Spleen (tissue), 13 donors: ENCODE measurements at regions of chr1 and their contacts with region 1.

Region 1: GRCh38 chr1:75632350-75632949 is 21.5 kb upstream of the SLC44A5 start:
- DNase-seq: no peak
- H3K4me3 ChIP-seq: no peak overlapping the region
- H3K27ac ChIP-seq: no peak overlapping the region
- H3K4me1 ChIP-seq: no peaks in the 10 kb centered on the region
- H3K27me3 ChIP-seq: peaks cover 0 to 3% (median 0%) of the 10 kb centered on the region in 7 donors
- CTCF ChIP-seq: peak in 10 of 11 experiments; percentile 27 to 66 (median 54)
- POLR2A ChIP-seq: no peak

Region 2: GRCh38 chr1:75265792-75266191 is 366.7 kb before region 1 on chr1:
- intact Hi-C with region 1: loop called (anchors 5 kb)
- DNase-seq: no peak
- H3K4me3 ChIP-seq: no peak overlapping the region
- H3K27ac ChIP-seq: no peak overlapping the region
- H3K4me1 ChIP-seq: no peaks in the 10 kb centered on the region
- H3K27me3 ChIP-seq: no peaks in the 10 kb centered on the region
- CTCF ChIP-seq: peak in 10 of 11 experiments; percentile 16 to 60 (median 50)
- POLR2A ChIP-seq: no peak